Tibial artery (tissue), 4 donors: ENCODE measurements at regions of chr15 and their contacts with region 1.

Region 1: GRCh38 chr15:76190834-76191538 is 120.3 kb downstream of the ETFA start:
- DNase-seq: peak; percentile 68 to 83
- H3K4me3 ChIP-seq: no peak overlapping the region
- H3K27ac ChIP-seq: no peak overlapping the region
- H3K4me1 ChIP-seq: peaks cover 0 to 22% (median 14%) of the 10 kb centered on the region in 4 donors
- H3K27me3 ChIP-seq: peaks cover 0 to 48% of the 10 kb centered on the region in 2 donors
- CTCF ChIP-seq: peak; percentile 86 to 89

Region 2: GRCh38 chr15:76073575-76073974 is 117.4 kb before region 1 on chr15:
- intact Hi-C with region 1: no loop called
- DNase-seq: no peak
- H3K4me3 ChIP-seq: no peak overlapping the region
- H3K27ac ChIP-seq: no peak overlapping the region
- H3K4me1 ChIP-seq: no peaks in the 10 kb centered on the region
- H3K27me3 ChIP-seq: peaks cover 0 to 10% of the 10 kb centered on the region in 2 donors
- CTCF ChIP-seq: no peak

Region 3: DNA sequence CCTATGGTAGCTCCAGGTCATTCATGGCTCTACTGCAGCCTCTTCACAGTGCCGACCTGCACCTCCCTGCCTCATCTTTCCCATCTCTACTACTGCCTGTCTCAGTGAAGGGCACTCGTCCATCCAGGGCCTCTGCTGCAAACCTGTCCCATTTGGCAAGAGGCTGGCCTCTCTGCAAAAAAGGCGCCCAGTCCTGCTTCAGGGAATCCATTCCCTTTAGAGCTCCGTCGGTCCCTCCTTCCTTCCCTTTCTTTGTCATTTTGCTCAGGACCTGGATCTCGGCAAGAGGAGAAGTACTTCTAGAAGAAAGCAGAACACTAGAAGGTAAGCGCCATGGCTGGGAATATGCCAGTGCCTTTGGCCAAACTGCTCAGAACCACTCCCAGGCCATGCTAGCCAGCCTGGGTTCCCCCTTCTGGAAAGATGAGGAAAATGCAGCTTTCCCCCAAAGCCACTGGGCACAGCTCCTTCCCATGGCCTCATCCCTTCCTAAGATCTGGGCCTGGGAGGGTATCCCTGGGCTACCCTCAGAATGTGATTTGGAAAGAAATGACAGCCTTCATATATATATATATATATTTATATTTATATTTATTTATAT is 139.2 kb after region 1 on chr15:
- intact Hi-C with region 1: loop called (anchors 5 kb)
- DNase-seq: peak in 1 of 2 donors; percentile 51
- H3K4me3 ChIP-seq: no peak overlapping the region
- H3K27ac ChIP-seq: no peak overlapping the region
- H3K4me1 ChIP-seq: no peaks in the 10 kb centered on the region
- H3K27me3 ChIP-seq: peaks cover 0 to 47% of the 10 kb centered on the region in 2 donors
- CTCF ChIP-seq: peak; percentile 53